Activated T-helper 1 cell treated with anti-CD3 and anti-CD28 coated beads, Interleukin-12 subunit alpha, Interleukin-12 subunit beta, Interleukin-2, Interleukin-4 antibody, amounts not matched to agents 30 ng/mL and 10 ng/mL and 1 ng/mL, durations not matched to agents 14 hours and 24 hours and 36 hours (primary cell): ENCODE measurements at regions of chr1 and their contacts with region 1.

Region 1: DNA sequence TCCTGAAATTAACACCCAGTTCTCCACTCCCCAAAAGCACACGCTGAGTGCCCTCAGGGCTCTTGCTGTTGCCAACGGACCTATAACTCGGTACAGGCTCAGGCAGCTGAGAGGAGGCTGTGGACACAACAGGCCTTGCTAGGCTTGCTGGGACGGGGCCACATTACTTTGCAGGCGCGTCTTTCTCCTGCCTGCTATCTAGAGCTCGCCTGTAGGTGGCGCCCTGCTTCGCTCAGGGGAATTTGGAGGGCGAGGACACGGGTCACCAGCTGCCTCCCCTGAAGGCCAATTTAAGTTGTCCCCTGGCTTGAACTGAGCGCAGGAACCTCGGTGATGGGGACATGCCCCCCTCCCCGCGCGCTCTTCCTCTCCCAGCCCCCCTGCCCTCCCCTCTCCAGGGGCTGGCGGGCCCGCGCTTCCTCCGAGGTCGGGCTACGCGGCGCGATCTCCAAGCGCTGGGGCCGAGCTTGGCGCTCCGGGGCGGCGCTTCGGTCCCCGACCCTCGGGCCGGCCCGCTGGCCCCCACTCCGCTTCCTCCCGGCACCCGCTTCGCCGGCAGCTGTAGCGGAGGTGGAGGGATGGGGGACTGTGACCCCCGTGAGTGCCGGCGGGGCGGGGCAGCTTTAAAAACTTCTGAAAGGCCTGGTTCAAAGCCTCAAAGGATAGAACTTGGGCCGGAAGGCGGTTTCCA is 32.4 kb upstream of the NFIA start:
- DNase-seq: peak; percentile 81
- H3K4me3 Mint-ChIP-seq: peak overlapping the region; percentile 74
- H3K27ac Mint-ChIP-seq: no peak overlapping the region
- H3K4me1 Mint-ChIP-seq: peaks cover 31% of the 10 kb centered on the region
- H3K27me3 Mint-ChIP-seq: peaks cover 48% of the 10 kb centered on the region

Region 2: DNA sequence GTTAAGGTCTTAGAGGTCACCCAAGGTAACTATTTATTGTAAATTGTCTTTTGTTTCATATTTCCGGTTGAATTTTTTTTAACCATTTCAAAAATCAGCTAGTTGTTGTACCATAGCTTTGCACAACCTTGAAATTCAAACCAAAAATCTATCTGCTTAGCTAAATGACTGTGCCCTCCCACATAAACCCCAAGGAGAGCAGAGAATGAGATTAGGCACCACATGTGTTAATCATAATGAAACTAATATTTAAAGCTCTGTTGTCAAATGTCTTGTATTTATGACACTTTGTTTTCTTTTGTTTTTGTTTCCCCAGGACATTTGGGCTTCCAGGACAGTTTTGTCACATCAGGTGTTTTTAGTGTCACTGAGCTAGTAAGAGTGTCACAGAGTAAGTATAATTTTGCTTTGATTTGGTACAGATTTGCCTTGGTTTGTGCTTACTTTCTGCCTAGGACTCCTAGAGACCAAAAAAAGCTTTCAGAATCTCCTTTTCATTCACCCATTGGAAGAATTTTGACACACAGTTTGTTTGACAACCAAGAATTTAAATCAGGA is 282.3 kb after region 1 on chr1:
- intact Hi-C with region 1: loop called (anchors 5 kb)
- DNase-seq: peak; percentile 14
- H3K4me3 Mint-ChIP-seq: peak overlapping the region; percentile 4
- H3K27ac Mint-ChIP-seq: peak overlapping the region; percentile 77
- H3K4me1 Mint-ChIP-seq: peaks cover 29% of the 10 kb centered on the region
- H3K27me3 Mint-ChIP-seq: peaks cover 23% of the 10 kb centered on the region

Region 3: DNA sequence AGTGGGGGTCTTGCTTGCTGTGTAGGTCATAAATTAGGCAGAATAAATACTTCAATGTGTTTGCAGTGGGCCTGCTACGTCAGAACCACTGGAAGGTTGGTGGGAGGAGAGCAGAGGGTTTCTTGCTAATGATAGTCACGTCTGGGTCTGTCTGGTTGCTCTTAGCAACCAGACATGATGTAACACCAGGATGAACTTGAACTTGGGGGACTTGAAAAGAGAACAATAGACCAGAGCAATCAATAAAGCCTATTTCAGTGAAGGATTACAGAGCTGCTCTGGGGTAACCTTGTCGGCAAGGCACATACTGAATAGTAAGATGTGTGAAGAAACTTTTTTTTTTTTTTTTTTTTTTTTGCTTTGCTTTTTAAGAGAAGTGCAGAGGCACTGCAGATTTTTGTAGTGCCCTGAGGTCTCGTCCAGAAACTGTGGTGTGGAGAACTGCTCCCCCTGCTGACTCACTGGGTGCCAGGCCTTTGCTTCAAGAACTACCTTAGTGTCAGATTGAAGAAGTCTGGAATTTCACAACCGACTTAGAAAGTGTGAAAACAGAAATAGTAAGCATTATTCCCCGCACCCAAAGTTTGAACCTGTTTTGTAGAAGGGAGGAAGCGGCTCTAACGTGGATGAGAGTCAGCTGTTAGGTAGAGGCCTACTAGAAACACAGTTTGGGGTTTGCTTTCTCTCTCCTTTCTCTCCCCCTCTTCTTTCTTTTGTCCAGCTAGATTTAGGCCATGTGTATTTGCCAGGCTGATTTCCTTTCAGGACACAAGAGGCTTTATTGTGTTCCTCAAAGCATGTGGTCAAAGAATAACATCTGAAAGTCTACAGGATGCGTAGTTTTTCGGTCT is 403.3 kb after region 1 on chr1:
- intact Hi-C with region 1: loop called (anchors 1 kb)
- DNase-seq: peak; percentile 48
- H3K4me3 Mint-ChIP-seq: no peak overlapping the region
- H3K27ac Mint-ChIP-seq: no peak overlapping the region
- H3K4me1 Mint-ChIP-seq: peaks cover 8% of the 10 kb centered on the region
- H3K27me3 Mint-ChIP-seq: peaks cover 9% of the 10 kb centered on the region

Region 4: GRCh38 chr1:61641578-61642336 is 591.8 kb after region 1 on chr1:
- intact Hi-C with region 1: loop called (anchors 5 kb)
- DNase-seq: peak; percentile 35
- H3K4me3 Mint-ChIP-seq: peak overlapping the region; percentile 60
- H3K27ac Mint-ChIP-seq: no peak overlapping the region
- H3K4me1 Mint-ChIP-seq: peaks cover 11% of the 10 kb centered on the region
- H3K27me3 Mint-ChIP-seq: peaks cover 11% of the 10 kb centered on the region